ENCODE measurements at regions of chr14 and their contacts with region 1.

Region 1: DNA sequence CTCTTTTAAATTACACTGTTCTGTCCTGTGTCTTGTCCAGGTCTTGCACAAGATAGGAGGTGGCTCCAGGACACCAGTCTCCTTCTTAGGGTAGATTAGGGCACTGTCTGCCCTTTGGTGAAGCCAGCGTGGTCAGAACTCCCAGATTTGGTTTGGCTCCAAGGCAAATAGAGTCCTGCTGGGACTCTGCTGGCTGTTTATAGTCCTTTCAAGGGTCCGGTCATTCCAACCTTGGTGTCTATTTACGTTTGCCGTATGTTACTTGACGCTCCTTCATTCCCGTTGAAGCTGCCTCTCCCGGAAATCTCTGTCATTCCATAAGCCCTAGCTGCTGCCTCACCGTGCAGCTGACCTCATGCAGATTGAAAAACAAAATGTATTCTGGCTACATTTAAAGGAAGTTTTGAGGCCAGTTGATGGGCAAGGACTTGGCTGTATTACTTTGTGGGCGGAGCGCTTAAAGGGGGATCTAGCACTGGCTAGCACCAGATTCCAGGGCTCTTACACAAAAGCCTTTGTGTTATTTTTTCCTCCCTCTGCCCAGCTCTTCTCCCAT is 180.6 kb downstream of the AKAP6 start:
- DNase-seq: no peak
- ATAC-seq: no peak
- H3K4me3 ChIP-seq: no peak overlapping the region
- H3K27ac ChIP-seq: no peak overlapping the region
- H3K4me1 ChIP-seq: peaks cover 4 to 6% of the 10 kb centered on the region in 2 experiments; a peak in 3 of 4 replicates
- H3K27me3 ChIP-seq: no peaks in the 10 kb centered on the region
- CTCF ChIP-seq: no peak
- POLR2A ChIP-seq: no peak
- RAD21 ChIP-seq: no peak

Region 2: DNA sequence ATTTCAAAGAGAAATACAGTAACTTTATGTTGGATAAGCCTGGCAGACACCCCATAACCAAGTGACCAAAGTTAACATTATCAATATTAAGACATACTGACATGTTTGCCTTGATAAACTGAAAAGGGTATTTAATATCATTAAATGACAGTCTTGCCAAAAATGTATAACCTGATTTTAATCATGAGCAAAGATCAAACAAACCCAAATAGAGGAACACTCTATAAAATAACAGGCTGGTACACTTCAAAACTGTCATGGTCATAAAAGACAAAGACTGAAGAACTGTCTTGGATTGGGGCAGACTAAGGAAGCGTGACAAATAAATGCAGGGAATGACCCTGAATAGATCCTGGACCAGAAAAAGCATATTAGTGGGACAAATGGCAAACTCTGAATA is 116.6 kb before region 1 on chr14:
- CTCF ChIA-PET with region 1: no interaction called
- POLR2A ChIA-PET with region 1: no interaction called
- RAD21 ChIA-PET with region 1: no interaction called
- intact Hi-C with region 1: no loop called
- DNase-seq: no peak
- ATAC-seq: no peak
- H3K4me3 ChIP-seq: no peak overlapping the region
- H3K27ac ChIP-seq: no peak overlapping the region
- H3K4me1 ChIP-seq: no peaks in the 10 kb centered on the region
- H3K27me3 ChIP-seq: no peaks in the 10 kb centered on the region
- CTCF ChIP-seq: no peak
- POLR2A ChIP-seq: no peak
- RAD21 ChIP-seq: no peak

Region 3: GRCh38 chr14:32524609-32525375 is 15.1 kb after region 1 on chr14:
- CTCF ChIA-PET with region 1: interaction called, 10 read pairs
- POLR2A ChIA-PET with region 1: no interaction called
- RAD21 ChIA-PET with region 1: no interaction called
- intact Hi-C with region 1: no loop called
- DNase-seq: no peak
- ATAC-seq: no peak
- H3K4me3 ChIP-seq: no peak overlapping the region
- H3K27ac ChIP-seq: no peak overlapping the region
- H3K4me1 ChIP-seq: no peaks in the 10 kb centered on the region
- H3K27me3 ChIP-seq: no peaks in the 10 kb centered on the region
- CTCF ChIP-seq: no peak
- POLR2A ChIP-seq: no peak
- RAD21 ChIP-seq: no peak